ENCODE measurements at regions of chr13 and their contacts with region 1.

Region 1: GRCh38 chr13:59391696-59392095 is 772.0 kb downstream of the DIAPH3 start:
- DNase-seq: peak; percentile 57 to 76
- H3K4me3 ChIP-seq: no peak overlapping the region
- H3K4me3 Mint-ChIP-seq: no peak overlapping the region
- H3K27ac Mint-ChIP-seq: no peak overlapping the region
- H3K4me1 ChIP-seq: no peaks in the 10 kb centered on the region
- H3K4me1 Mint-ChIP-seq: peaks cover 6% of the 10 kb centered on the region
- H3K27me3 ChIP-seq: no peaks in the 10 kb centered on the region
- H3K27me3 Mint-ChIP-seq: no peaks in the 10 kb centered on the region
- CTCF ChIP-seq: peak; percentile 86 to 89

Region 2: DNA sequence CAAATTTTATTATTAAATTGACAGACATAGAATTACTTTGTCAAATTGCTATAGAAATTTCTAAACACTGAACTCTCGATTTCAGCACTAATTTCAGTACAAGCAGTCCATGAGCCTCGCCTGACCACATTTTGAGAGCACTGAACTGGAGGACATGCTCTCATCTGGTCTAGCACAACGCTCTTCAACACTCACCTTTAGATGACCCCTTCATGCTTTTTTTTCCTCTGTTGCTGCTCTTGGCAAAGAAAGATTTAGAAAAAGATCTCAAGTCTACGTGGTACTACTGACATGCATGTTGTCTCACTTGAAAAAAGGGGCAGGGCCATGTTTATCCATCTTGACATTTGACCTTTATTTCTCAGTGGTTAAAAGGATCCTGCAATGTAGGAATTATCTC is 209.5 kb before region 1 on chr13:
- CTCF ChIA-PET with region 1: no interaction called
- POLR2A ChIA-PET with region 1: no interaction called
- intact Hi-C with region 1: no loop called
- DNase-seq: no peak
- H3K4me3 ChIP-seq: no peak overlapping the region
- H3K4me3 Mint-ChIP-seq: no peak overlapping the region
- H3K27ac Mint-ChIP-seq: no peak overlapping the region
- H3K4me1 ChIP-seq: no peaks in the 10 kb centered on the region
- H3K4me1 Mint-ChIP-seq: no peaks in the 10 kb centered on the region
- H3K27me3 ChIP-seq: no peaks in the 10 kb centered on the region
- H3K27me3 Mint-ChIP-seq: no peaks in the 10 kb centered on the region
- CTCF ChIP-seq: no peak

Region 3: GRCh38 chr13:59477011-59477410 is 85.3 kb after region 1 on chr13:
- CTCF ChIA-PET with region 1: no interaction called
- POLR2A ChIA-PET with region 1: no interaction called
- intact Hi-C with region 1: loop called (anchors 5 kb)
- DNase-seq: peak in 1 of 2 experiments; percentile 11
- H3K4me3 ChIP-seq: no peak overlapping the region
- H3K4me3 Mint-ChIP-seq: no peak overlapping the region
- H3K27ac Mint-ChIP-seq: no peak overlapping the region
- H3K4me1 ChIP-seq: no peaks in the 10 kb centered on the region
- H3K4me1 Mint-ChIP-seq: peaks cover 6% of the 10 kb centered on the region
- H3K27me3 ChIP-seq: no peaks in the 10 kb centered on the region
- H3K27me3 Mint-ChIP-seq: no peaks in the 10 kb centered on the region
- CTCF ChIP-seq: peak; percentile 23 to 54

Region 4: DNA sequence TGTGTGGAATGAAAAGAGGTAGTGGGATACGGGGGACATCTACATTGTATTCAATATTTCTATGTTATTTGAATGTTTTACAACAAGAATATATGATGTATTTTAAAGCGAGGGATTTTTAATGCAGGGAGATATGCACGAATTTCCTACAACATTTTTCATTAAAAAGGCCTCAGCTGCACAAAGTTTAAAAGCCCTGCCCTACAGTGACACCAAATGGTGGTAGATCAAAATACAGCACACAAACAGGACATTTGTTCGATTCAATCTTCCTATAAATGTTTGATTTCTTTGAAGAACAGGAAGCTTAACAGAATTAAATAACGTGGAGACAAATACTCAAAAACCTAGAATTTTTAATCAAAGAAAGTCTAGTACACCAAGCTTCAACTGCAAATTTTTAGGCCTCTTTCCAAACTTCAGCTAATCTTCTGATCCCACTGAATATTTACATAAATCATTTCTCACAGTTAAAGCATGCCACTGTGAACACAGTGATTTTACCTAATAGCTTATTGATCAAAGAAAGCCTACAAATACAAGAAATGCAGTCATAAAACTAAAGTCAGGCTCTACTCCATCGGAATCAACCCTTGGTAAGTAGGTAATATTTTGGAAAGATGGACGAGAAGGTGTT is 514.8 kb after region 1 on chr13:
- CTCF ChIA-PET with region 1: no interaction called
- POLR2A ChIA-PET with region 1: no interaction called
- intact Hi-C with region 1: loop called (anchors 1 kb)
- DNase-seq: peak in 1 of 2 experiments; percentile 30
- H3K4me3 ChIP-seq: no peak overlapping the region
- H3K4me3 Mint-ChIP-seq: no peak overlapping the region
- H3K27ac Mint-ChIP-seq: no peak overlapping the region
- H3K4me1 ChIP-seq: peaks cover 11% of the 10 kb centered on the region; the same call in 1 of the 2 replicates
- H3K4me1 Mint-ChIP-seq: peaks cover 7% of the 10 kb centered on the region
- H3K27me3 ChIP-seq: no peaks in the 10 kb centered on the region
- H3K27me3 Mint-ChIP-seq: no peaks in the 10 kb centered on the region
- CTCF ChIP-seq: peak; percentile 66 to 67

Region 5: GRCh38 chr13:60043262-60043661 is 651.6 kb after region 1 on chr13:
- CTCF ChIA-PET with region 1: no interaction called
- POLR2A ChIA-PET with region 1: no interaction called
- intact Hi-C with region 1: no loop called
- DNase-seq: no peak
- H3K4me3 ChIP-seq: no peak overlapping the region
- H3K4me3 Mint-ChIP-seq: no peak overlapping the region
- H3K27ac Mint-ChIP-seq: no peak overlapping the region
- H3K4me1 ChIP-seq: no peaks in the 10 kb centered on the region
- H3K4me1 Mint-ChIP-seq: peaks cover 18% of the 10 kb centered on the region
- H3K27me3 ChIP-seq: no peaks in the 10 kb centered on the region
- H3K27me3 Mint-ChIP-seq: no peaks in the 10 kb centered on the region
- CTCF ChIP-seq: no peak

Region 6: DNA sequence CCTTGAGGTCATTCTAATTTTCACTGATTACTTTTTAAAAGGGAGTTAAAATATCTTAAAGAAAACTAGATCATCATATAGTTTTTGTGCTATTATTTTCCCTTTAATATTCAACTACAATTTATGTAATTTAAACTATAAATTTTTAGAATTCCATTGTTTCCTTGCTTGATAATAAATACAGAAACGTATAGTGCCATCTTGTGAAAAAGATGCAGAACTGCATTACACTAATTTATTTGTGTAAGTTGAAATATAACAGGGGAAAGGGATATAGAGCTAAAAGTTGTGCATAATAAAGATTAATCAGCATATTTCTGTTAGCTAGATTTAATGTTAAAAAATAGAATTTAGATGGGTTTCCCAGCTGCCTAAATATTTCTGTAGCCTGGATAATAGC is 943.8 kb after region 1 on chr13:
- CTCF ChIA-PET with region 1: no interaction called
- POLR2A ChIA-PET with region 1: no interaction called
- intact Hi-C with region 1: loop called (anchors 5 kb)
- DNase-seq: no peak
- H3K4me3 ChIP-seq: no peak overlapping the region
- H3K4me3 Mint-ChIP-seq: no peak overlapping the region
- H3K27ac Mint-ChIP-seq: no peak overlapping the region
- H3K4me1 ChIP-seq: no peaks in the 10 kb centered on the region
- H3K4me1 Mint-ChIP-seq: no peaks in the 10 kb centered on the region
- H3K27me3 ChIP-seq: no peaks in the 10 kb centered on the region
- H3K27me3 Mint-ChIP-seq: peaks cover 4% of the 10 kb centered on the region
- CTCF ChIP-seq: peak; percentile 58 to 73